HepG2 (cell line): ENCODE measurements at regions of chr6 and their contacts with region 1.

Region 1: GRCh38 chr6:106339334-106340029 is 13.9 kb upstream of the ATG5 start:
- DNase-seq: peak; percentile 46
- ATAC-seq: peak; percentile 98
- H3K4me3 ChIP-seq: no peak overlapping the region
- H3K27ac ChIP-seq: no peak overlapping the region
- H3K4me1 ChIP-seq: no peaks in the 10 kb centered on the region
- H3K27me3 ChIP-seq: peaks cover 0 to 8% of the 10 kb centered on the region in 2 experiments; a peak in 2 of 5 replicates
- CTCF ChIP-seq: peak; percentile 73
- EP300 ChIP-seq: no peak
- POLR2A ChIP-seq: no peak
- RAD21 ChIP-seq: no peak

Region 2: DNA sequence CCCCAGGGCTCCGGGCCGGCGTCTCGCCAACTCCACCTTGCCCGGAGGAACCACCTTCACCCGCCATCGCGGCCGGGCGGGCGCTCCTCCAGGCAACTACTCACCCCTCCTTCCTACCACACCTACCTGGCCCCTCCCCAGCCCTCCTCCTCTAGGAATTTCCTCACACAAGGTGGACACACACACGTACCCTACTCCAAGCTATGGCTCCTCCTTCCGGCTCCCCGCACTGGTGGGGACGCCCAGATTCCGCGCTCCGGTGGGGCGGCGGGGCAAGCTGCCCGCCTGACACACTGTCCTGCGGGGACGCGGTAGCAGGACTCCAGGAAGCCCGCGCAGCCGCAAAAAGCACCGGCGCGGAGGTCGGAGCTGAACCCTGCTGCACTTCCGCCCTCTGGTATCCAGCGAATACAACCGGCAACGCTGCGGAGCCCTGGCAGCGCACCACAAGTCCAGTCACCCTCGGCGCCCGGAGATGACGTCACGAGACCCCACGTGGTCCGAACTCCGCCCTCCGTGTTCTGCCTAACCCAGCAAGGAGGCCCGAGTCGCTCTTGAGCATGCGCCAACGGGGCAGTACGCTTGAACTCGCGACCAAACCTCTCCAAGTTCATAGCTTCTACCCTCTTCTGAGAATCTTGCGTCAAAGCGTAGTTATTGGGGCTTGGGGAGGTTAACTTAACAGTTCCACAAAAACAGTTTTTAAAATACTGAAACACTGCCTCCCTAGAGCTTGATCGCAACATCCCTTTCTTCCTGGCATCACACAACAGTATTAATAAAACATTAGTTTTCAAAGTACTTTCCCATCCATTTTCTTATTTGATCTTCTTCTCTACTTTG is 13.9 kb before region 1 on chr6 and contains the start of gene ATG5:
- CTCF ChIA-PET with region 1: no interaction called
- POLR2A ChIA-PET with region 1: interaction called, 15 read pairs
- in situ Hi-C with region 1: no loop called
- intact Hi-C with region 1: no loop called
- DNase-seq: peak; percentile 96
- ATAC-seq: peak; percentile 98
- H3K4me3 ChIP-seq: peak within 1 kb of the TSS; percentile 85 to 95 (median 89)
- H3K27ac ChIP-seq: peak within 1 kb of the TSS; percentile 94
- H3K4me1 ChIP-seq: peaks cover 26% of the 10 kb centered on the region
- H3K27me3 ChIP-seq: peaks cover 0 to 26% of the 10 kb centered on the region in 2 experiments; a peak in 3 of 5 replicates
- CTCF ChIP-seq: peak; percentile 43
- EP300 ChIP-seq: peak in 1 of 2 experiments; percentile 50; a peak in 2 of 4 replicates
- POLR2A ChIP-seq: peak; percentile 83 to 90
- RAD21 ChIP-seq: peak; percentile 28; the same call in 1 of the 2 replicates
- total RNA-seq, gene ATG5: 48.0 and 56.8 TPM in 2 replicates

Region 3: DNA sequence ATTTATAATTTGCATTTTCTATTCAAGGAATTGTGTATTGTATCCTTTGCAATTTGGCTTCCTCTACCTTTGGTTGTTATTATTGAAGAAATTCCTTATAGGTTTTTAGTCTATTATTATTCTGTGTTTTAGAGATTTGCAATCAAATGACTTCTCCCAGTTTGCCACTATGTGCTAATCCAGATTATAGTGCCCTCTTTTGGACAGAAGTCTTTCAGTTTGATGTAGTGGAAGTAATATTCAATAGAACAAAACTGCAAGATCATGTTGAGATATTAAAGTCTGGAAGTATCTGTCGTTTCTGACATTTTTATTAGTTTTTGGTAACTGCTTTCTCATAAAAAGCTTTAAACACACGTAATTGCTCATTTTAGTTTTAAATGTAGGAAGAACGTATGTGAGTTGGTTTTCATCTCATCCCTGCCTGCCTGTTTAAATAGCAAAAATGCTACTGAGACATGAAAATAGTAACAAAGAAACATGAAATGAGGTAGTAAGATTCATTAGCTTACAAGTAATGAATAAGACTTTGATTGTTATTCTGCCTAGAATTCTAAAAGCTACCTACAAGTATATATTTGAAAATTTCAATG is 217.0 kb after region 1 on chr6:
- CTCF ChIA-PET with region 1: no interaction called
- POLR2A ChIA-PET with region 1: no interaction called
- in situ Hi-C with region 1: loop called (anchors 10 kb)
- intact Hi-C with region 1: no loop called
- DNase-seq: peak; percentile 15
- ATAC-seq: no peak
- H3K4me3 ChIP-seq: no peak overlapping the region
- H3K27ac ChIP-seq: no peak overlapping the region
- H3K4me1 ChIP-seq: peaks cover 41% of the 10 kb centered on the region
- H3K27me3 ChIP-seq: no peaks in the 10 kb centered on the region
- CTCF ChIP-seq: peak; percentile 21; the same call in 1 of the 2 replicates
- EP300 ChIP-seq: no peak
- POLR2A ChIP-seq: no peak
- RAD21 ChIP-seq: no peak